CD8-positive, alpha-beta T cell (primary cell): ENCODE measurements at regions of chr7 and their contacts with region 1.

Region 1: GRCh38 chr7:127447326-127447945 is 54.9 kb upstream of the ZNF800 start:
- DNase-seq: peak in 8 of 9 experiments; percentile 25 to 85 (median 50)
- ATAC-seq: peak; percentile 99
- H3K4me3 ChIP-seq: no peak overlapping the region
- H3K4me3 Mint-ChIP-seq: no peak overlapping the region
- H3K27ac ChIP-seq: no peak overlapping the region
- H3K27ac Mint-ChIP-seq: no peak overlapping the region
- H3K4me1 ChIP-seq: peaks cover 13% of the 10 kb centered on the region
- H3K4me1 Mint-ChIP-seq: peaks cover 20% of the 10 kb centered on the region
- H3K27me3 ChIP-seq: no peaks in the 10 kb centered on the region
- H3K27me3 Mint-ChIP-seq: peaks cover 6% of the 10 kb centered on the region
- CTCF ChIP-seq: peak; percentile 78

Region 2: DNA sequence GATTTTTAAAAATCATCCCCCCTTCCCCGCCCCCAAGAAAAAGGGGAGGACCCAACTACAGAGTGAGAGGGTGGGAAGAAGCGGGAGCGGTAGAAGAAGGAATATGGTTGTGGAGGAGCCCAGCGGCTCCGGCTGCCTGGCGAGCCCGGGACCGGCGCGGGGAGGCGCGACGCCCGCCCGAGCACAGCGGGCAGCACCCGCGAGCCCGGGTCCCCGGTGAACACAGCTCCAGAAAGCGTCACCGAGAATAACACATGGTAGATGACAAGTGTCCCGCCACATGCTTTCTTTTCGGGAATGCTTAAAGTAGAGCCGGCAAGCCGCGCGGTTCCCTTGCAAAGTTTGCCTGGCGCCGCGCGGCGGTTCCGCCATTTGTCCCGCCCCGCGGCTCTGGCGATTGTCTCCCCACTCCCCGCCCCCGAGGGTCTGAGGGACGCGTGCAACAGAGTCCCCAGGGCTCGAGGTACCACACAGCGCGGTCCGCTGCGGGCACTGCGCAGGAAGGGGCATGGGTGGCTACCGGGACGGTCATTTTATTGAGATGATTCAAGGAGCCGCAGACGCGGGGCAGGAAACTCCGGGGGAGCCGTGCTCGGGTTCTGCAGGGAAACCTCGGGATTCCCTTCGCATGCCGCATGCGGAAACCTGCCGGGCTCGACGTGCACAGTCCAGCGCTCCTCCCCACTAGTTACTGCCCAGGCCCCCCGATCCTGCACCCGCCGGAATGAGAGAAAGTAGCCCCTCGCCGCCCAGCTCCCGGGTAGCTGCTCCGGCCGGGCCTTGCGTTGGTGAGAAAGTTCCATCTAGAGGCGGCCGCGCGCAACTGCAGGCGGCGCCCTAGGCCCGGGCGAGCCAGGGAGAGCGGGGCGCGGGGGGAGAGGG is 193.9 kb before region 1 on chr7:
- CTCF ChIA-PET with region 1: interaction called, 3 read pairs
- POLR2A ChIA-PET with region 1: no interaction called
- intact Hi-C with region 1: loop called (anchors 5 to 10 kb)
- DNase-seq: peak in 8 of 9 experiments; percentile 33 to 74 (median 57)
- ATAC-seq: peak; percentile 84
- H3K4me3 ChIP-seq: peak overlapping the region; percentile 75 to 76
- H3K4me3 Mint-ChIP-seq: peak overlapping the region; percentile 89
- H3K27ac ChIP-seq: no peak overlapping the region
- H3K27ac Mint-ChIP-seq: no peak overlapping the region
- H3K4me1 ChIP-seq: peaks cover 14% of the 10 kb centered on the region
- H3K4me1 Mint-ChIP-seq: peaks cover 25% of the 10 kb centered on the region
- H3K27me3 ChIP-seq: peaks cover 26 to 35% of the 10 kb centered on the region in 2 experiments
- H3K27me3 Mint-ChIP-seq: peaks cover 65% of the 10 kb centered on the region
- CTCF ChIP-seq: peak; percentile 87

Region 3: DNA sequence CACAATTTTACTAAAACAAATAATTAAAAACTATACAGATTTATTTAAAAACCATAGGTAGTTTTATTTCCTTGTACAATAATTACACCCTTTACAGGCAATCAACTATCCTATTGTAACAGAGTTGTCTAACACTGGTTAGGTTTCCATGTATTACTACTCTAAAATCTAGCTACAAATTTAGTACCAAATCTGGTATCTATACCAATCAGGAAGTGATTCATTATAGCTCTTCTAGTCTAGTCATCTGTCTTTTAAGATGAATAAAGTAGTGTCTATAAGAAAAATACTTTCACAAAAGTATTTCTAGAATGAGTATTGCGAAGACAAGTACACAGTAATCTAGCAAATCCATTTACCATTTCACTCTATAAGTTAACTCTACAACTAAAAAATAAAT is 71.8 kb before region 1 on chr7:
- CTCF ChIA-PET with region 1: interaction called, 7 read pairs
- POLR2A ChIA-PET with region 1: no interaction called
- intact Hi-C with region 1: loop called in 1 of 2 experiments (anchors 5 kb)
- DNase-seq: no peak
- ATAC-seq: no peak
- H3K4me3 ChIP-seq: no peak overlapping the region
- H3K4me3 Mint-ChIP-seq: no peak overlapping the region
- H3K27ac ChIP-seq: no peak overlapping the region
- H3K27ac Mint-ChIP-seq: no peak overlapping the region
- H3K4me1 ChIP-seq: peaks cover 15% of the 10 kb centered on the region
- H3K4me1 Mint-ChIP-seq: peaks cover 60% of the 10 kb centered on the region
- H3K27me3 ChIP-seq: no peaks in the 10 kb centered on the region
- H3K27me3 Mint-ChIP-seq: no peaks in the 10 kb centered on the region
- CTCF ChIP-seq: no peak

Region 4: DNA sequence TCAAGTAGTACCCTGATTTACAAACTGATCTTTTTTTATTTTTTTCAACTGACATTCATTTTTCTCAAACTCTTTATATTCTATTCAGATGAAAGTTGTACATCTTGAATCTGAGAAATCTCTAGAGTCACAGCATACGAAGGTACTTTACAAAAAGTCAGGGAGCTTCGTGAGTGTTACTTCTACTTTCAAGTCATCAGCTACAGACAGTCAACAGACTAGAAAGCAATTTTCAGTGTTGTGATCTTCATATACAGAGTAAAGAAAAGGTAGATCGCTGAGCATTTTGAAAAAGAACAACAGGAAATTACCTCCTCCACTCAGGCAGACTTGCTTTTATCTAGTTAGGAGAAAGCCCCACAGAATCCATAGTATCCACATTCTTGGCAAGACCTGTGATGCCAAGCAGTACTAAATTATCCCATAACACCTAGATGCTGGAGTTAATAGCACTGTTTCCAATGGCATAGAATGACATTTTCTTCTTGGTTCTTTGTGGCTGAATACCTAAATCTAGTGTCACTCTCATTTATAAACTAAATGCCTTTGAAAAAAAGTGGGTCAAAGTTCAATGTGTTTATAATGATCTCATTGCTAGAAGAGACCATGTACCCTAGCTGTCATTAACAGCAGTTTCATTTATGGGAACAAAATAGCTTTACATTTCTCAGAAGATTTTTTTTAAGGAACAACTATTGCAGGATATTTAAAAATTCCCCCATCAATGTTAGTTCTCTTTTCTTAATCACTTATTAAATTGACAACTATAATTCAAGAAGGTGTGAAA is 43.0 kb before region 1 on chr7:
- CTCF ChIA-PET with region 1: interaction called, 10 read pairs
- POLR2A ChIA-PET with region 1: no interaction called
- intact Hi-C with region 1: no loop called
- DNase-seq: peak in 2 of 9 experiments; percentile 15 to 56
- ATAC-seq: peak; percentile 77
- H3K4me3 ChIP-seq: no peak overlapping the region
- H3K4me3 Mint-ChIP-seq: peak overlapping the region; percentile 20
- H3K27ac ChIP-seq: peak overlapping the region; percentile 3 to 21
- H3K27ac Mint-ChIP-seq: peak overlapping the region; percentile 84
- H3K4me1 ChIP-seq: peaks cover 28% of the 10 kb centered on the region
- H3K4me1 Mint-ChIP-seq: peaks cover 30% of the 10 kb centered on the region
- H3K27me3 ChIP-seq: no peaks in the 10 kb centered on the region
- H3K27me3 Mint-ChIP-seq: no peaks in the 10 kb centered on the region
- CTCF ChIP-seq: no peak

Region 5: GRCh38 chr7:127478024-127478355 is 30.6 kb after region 1 on chr7:
- CTCF ChIA-PET with region 1: interaction called, 13 read pairs
- POLR2A ChIA-PET with region 1: no interaction called
- intact Hi-C with region 1: no loop called
- DNase-seq: peak in 3 of 9 experiments; percentile 6 to 52 (median 25)
- ATAC-seq: peak; percentile 73
- H3K4me3 ChIP-seq: no peak overlapping the region
- H3K4me3 Mint-ChIP-seq: peak overlapping the region; percentile 16
- H3K27ac ChIP-seq: no peak overlapping the region
- H3K27ac Mint-ChIP-seq: peak overlapping the region; percentile 49
- H3K4me1 ChIP-seq: peaks cover 17% of the 10 kb centered on the region
- H3K4me1 Mint-ChIP-seq: peaks cover 30% of the 10 kb centered on the region
- H3K27me3 ChIP-seq: no peaks in the 10 kb centered on the region
- H3K27me3 Mint-ChIP-seq: no peaks in the 10 kb centered on the region
- CTCF ChIP-seq: peak; percentile 36